PC-3 (cell line): ENCODE measurements at regions of chr17 and their contacts with region 1.

Region 1: DNA sequence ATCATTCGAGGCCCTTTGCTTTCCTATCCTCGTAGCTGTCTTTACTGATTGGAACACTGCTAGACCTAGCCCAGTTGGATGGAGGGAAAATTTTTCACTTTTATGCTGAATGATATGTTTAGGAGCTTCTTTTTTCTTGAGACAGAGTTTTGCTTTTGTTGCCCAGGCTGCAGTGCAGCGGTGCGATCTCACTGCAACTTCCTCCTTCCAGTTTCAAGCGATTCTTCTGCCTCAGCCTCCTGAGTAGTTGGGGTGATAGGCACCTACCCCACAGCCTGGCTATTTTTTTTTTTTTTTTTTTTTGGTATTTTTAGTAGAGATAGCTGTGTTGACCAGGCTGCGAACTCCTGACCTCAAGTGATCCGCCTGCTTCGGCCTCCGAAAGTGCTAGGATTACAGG is 17.3 kb upstream of the PSMC5 start:
- DNase-seq: no peak
- ATAC-seq: no peak
- H3K4me3 ChIP-seq: no peak overlapping the region
- H3K27ac ChIP-seq: no peak overlapping the region
- H3K4me1 ChIP-seq: no peaks in the 10 kb centered on the region
- H3K27me3 ChIP-seq: no peaks in the 10 kb centered on the region
- CTCF ChIP-seq: no peak

Region 2: DNA sequence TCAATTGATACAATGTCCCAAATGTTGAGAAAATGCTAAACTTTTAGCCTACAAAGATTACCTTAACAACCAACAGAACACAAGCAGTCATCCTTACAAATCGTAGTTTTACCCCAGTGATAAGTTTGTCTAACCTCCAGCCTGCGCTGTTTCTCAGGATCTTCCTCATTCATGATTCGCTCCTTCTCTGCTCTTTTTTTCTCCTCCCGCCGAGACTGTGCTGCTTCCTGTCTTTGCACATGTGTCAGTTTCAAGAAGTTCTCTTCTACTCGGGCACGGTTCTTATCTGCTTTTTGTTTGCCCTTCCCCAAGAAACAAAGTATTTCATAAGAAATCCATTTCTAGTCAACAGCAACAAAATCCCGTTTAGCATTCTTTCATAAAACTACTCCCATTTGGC is 58.2 kb before region 1 on chr17:
- CTCF ChIA-PET with region 1: no interaction called
- POLR2A ChIA-PET with region 1: interaction called, 22 read pairs
- intact Hi-C with region 1: no loop called
- DNase-seq: no peak
- ATAC-seq: no peak
- H3K4me3 ChIP-seq: no peak overlapping the region
- H3K27ac ChIP-seq: no peak overlapping the region
- H3K4me1 ChIP-seq: no peaks in the 10 kb centered on the region
- H3K27me3 ChIP-seq: no peaks in the 10 kb centered on the region
- CTCF ChIP-seq: no peak

Region 3: DNA sequence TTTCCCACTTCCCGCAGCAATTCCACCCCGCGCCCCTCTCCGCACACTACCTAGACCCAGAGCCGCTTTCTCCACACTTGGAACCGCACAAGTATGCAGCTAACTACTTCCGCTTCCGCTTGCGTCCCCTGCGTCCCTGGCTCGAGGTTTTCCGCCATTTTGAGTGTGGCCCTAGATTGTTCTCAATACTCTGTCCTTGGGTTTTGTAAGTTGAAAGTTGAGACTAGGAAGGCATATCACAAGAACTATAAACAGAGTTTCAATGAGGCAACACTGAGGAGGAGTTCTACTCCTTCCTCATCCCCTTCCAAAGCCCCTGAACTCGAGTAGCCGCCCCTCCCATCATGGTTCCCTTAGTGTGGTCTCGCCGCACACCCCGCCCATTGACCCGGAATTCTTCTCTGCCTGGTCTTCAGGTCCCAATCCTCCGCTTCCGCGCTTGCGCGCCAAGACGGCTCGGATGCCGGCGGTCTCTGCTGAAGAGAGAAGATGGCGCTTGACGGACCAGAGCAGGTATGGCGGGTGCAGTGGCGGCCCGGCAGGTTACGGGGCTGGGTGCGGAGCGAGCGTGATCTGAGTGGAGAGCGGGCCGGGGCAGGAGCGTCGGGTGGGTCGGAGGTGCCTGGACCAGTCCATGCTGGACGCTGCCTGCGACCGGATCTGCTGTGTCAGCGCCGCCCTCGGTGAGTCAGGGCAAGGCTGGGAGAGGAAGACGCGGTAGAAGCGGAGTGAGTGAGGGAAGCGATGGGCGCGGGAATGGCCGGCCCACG is 17.2 kb after region 1 on chr17 and contains the starts of genes FTSJ3 and PSMC5:
- CTCF ChIA-PET with region 1: no interaction called
- POLR2A ChIA-PET with region 1: no interaction called
- intact Hi-C with region 1: no loop called
- DNase-seq: peak; percentile 97
- ATAC-seq: peak; percentile 91
- H3K4me3 ChIP-seq: peak within 1 kb of the TSS; percentile 89
- H3K27ac ChIP-seq: peak within 1 kb of the TSS; percentile 81
- H3K4me1 ChIP-seq: peaks cover 22% of the 10 kb centered on the region
- H3K27me3 ChIP-seq: no peaks in the 10 kb centered on the region
- CTCF ChIP-seq: peak; percentile 63
- total RNA-seq, gene FTSJ3: 82.4 and 112 TPM in 2 replicates
- total RNA-seq, gene PSMC5: 163 and 205 TPM in 2 replicates

Region 4: DNA sequence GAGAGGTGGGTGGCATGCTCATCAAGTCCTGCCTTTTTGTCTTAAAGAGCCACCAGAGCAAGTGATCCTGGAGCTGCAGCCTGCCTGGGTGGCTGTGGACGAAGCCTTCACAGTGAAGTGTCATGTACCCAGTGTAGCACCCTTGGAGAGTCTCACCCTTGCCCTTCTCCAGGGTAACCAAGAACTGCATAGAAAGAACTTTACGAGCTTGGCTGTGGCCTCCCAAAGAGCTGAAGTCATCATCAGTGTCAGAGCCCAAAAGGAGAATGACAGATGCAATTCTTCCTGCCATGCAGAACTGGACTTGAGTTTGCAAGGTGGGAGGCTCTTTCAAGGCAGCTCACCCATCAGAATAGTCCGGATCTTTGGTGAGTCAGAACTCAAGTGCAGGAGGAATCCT is 49.3 kb after region 1 on chr17:
- CTCF ChIA-PET with region 1: no interaction called
- POLR2A ChIA-PET with region 1: no interaction called
- intact Hi-C with region 1: no loop called
- DNase-seq: peak; percentile 18
- ATAC-seq: peak; percentile 42; the same call in 1 of the 2 replicates
- H3K4me3 ChIP-seq: no peak overlapping the region
- H3K27ac ChIP-seq: no peak overlapping the region
- H3K4me1 ChIP-seq: no peaks in the 10 kb centered on the region
- H3K27me3 ChIP-seq: peaks cover 8% of the 10 kb centered on the region; the same call in 1 of the 2 replicates
- CTCF ChIP-seq: no peak

Region 5: GRCh38 chr17:64025732-64026294 is 215.8 kb after region 1 on chr17:
- CTCF ChIA-PET with region 1: no interaction called
- POLR2A ChIA-PET with region 1: no interaction called
- intact Hi-C with region 1: no loop called
- DNase-seq: peak; percentile 89
- ATAC-seq: peak; percentile 87
- H3K4me3 ChIP-seq: peak overlapping the region; percentile 70
- H3K27ac ChIP-seq: no peak overlapping the region
- H3K4me1 ChIP-seq: peaks cover 4% of the 10 kb centered on the region; the same call in 1 of the 2 replicates
- H3K27me3 ChIP-seq: no peaks in the 10 kb centered on the region
- CTCF ChIP-seq: peak; percentile 99